Dorsolateral prefrontal cortex (tissue), 120 donors: ENCODE measurements at regions of chr12 and their contacts with region 1.

Region 1: DNA sequence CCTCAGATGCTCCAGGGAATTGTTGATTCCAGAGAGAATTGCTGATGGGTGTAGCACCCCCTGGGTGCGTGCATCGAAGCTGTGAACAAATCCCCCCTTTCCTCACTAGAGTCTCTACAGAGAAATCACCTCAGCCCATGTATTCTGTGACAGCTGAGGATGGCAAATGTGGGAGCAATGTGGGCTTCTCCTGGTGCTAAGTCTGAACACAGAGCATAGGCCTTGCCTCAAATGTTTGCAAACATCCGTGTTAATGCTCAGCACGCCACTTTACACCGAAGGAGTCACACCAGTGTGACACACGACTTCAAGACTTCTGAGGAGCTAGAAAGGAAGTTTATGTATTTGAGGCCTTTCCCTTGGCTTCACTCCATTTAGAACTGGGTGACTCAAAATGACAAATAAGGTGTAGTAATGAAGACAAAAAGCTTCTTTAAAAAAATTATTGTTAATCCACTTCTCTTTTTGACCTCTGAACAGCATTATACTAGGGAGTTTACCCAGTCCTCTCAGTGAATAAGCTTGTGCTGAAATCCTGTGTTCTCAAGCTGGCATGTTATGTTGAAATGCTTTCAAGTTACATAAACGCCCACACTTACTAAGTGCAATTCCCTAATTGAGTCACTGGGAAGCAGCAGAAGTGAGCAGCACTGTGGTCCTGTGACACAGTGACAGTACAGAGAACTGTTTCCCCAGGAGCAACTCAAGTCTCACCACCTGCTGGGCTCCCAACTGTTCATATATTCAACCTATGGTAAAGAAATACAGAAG is 92.9 kb downstream of the FAR2 start:
- DNase-seq: peak in 6 of 10 donors; percentile 4 to 67 (median 46)
- H3K4me3 ChIP-seq: no peak overlapping the region
- H3K27ac ChIP-seq: peak overlapping the region in 54 of 59 donors; percentile 5 to 82 (median 66)
- H3K27me3 ChIP-seq: no peaks in the 10 kb centered on the region
- CTCF ChIP-seq: peak in 10 of 56 donors; percentile 8 to 25 (median 18)

Region 2: GRCh38 chr12:29155079-29155478 is 86.9 kb before region 1 on chr12:
- intact Hi-C with region 1: loop called in 1 of 2 experiments (anchors 5 kb)
- DNase-seq: no peak
- H3K4me3 ChIP-seq: peak overlapping the region in 11 of 59 donors; percentile 0 to 52 (median 24)
- H3K27ac ChIP-seq: peak overlapping the region in 38 of 59 donors; percentile 2 to 94 (median 51)
- H3K27me3 ChIP-seq: no peaks in the 10 kb centered on the region
- CTCF ChIP-seq: no peak